Ovary (tissue), 10 donors: ENCODE measurements at regions of chr12 and their contacts with region 1.

Region 1: GRCh38 chr12:6062757-6063735 is 61.4 kb downstream of the VWF start:
- DNase-seq: peak in 3 of 5 donors; percentile 34 to 48 (median 35)
- H3K4me3 ChIP-seq: no peak overlapping the region
- H3K27ac ChIP-seq: no peak overlapping the region
- H3K4me1 ChIP-seq: no peaks in the 10 kb centered on the region
- H3K27me3 ChIP-seq: no peaks in the 10 kb centered on the region
- CTCF ChIP-seq: peak; percentile 24 to 55 (median 52)
- EP300 ChIP-seq: no peak
- POLR2A ChIP-seq: no peak

Region 2: GRCh38 chr12:6161124-6161882 is 98.3 kb after region 1 on chr12:
- intact Hi-C with region 1: no loop called
- DNase-seq: no peak
- H3K4me3 ChIP-seq: no peak overlapping the region
- H3K27ac ChIP-seq: no peak overlapping the region
- H3K4me1 ChIP-seq: peaks cover 2% of the 10 kb centered on the region
- H3K27me3 ChIP-seq: no peaks in the 10 kb centered on the region
- CTCF ChIP-seq: no peak
- EP300 ChIP-seq: no peak
- POLR2A ChIP-seq: no peak

Region 3: GRCh38 chr12:6195665-6196535 is 132.9 kb after region 1 on chr12:
- intact Hi-C with region 1: loop called in 1 of 4 experiments (anchors 10 kb)
- DNase-seq: peak; percentile 82 to 92 (median 89)
- H3K4me3 ChIP-seq: no peak overlapping the region
- H3K27ac ChIP-seq: peak overlapping the region in 1 of 2 donors; percentile 22
- H3K4me1 ChIP-seq: peaks cover 6% of the 10 kb centered on the region
- H3K27me3 ChIP-seq: no peaks in the 10 kb centered on the region
- CTCF ChIP-seq: peak; percentile 83 to 96 (median 95)
- EP300 ChIP-seq: no peak
- POLR2A ChIP-seq: no peak